Mammary epithelial cell (primary cell): ENCODE measurements at regions of chr12 and their contacts with region 1.

Region 1: GRCh38 chr12:27014085-27014858 is at the start of gene TM7SF3:
- DNase-seq: peak; percentile 92
- H3K4me3 ChIP-seq: peak within 1 kb of the TSS; percentile 73 to 97 (median 96)
- H3K27ac ChIP-seq: peak within 1 kb of the TSS; percentile 98
- H3K4me1 ChIP-seq: peaks cover 38% of the 10 kb centered on the region
- H3K27me3 ChIP-seq: no peaks in the 10 kb centered on the region
- CTCF ChIP-seq: peak; percentile 67 to 86
- total RNA-seq, gene TM7SF3: 182 to 298 TPM

Region 2: GRCh38 chr12:26918309-26919215 is 95.7 kb before region 1 on chr12:
- CTCF ChIA-PET with region 1: interaction called, 10 read pairs
- dilution Hi-C with region 1: no loop called
- in situ Hi-C with region 1: no loop called
- intact Hi-C with region 1: no loop called
- DNase-seq: no peak
- H3K4me3 ChIP-seq: no peak overlapping the region
- H3K27ac ChIP-seq: no peak overlapping the region
- H3K4me1 ChIP-seq: no peaks in the 10 kb centered on the region
- H3K27me3 ChIP-seq: no peaks in the 10 kb centered on the region
- CTCF ChIP-seq: no peak

Region 3: DNA sequence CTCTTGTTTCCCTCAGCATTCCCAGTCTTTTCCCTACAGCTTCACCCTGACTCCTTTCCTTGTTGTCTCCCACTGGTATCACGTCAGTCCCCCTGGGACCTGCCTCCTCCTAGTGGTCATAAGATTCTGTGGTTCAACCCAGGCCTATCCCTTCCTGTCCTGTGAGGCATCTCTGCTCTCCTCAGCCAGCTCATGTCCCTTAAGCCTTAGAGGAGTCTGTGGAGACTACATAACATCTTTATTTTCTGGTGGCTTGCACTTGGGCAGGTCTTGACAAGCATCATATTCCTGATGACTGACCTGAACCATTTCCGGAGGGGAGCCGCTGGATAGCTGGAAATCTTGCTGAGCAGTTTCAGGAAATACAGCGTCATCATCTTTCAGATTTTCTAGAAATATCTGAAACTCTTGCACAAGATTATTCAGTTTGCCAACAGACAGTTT is 67.4 kb after region 1 on chr12:
- CTCF ChIA-PET with region 1: no interaction called
- dilution Hi-C with region 1: no loop called
- in situ Hi-C with region 1: no loop called
- intact Hi-C with region 1: loop called (anchors 1 kb)
- DNase-seq: peak; percentile 96
- H3K4me3 ChIP-seq: no peak overlapping the region
- H3K27ac ChIP-seq: peak overlapping the region; percentile 100
- H3K4me1 ChIP-seq: peaks cover 56% of the 10 kb centered on the region
- H3K27me3 ChIP-seq: no peaks in the 10 kb centered on the region
- CTCF ChIP-seq: peak; percentile 26 to 55

Region 4: DNA sequence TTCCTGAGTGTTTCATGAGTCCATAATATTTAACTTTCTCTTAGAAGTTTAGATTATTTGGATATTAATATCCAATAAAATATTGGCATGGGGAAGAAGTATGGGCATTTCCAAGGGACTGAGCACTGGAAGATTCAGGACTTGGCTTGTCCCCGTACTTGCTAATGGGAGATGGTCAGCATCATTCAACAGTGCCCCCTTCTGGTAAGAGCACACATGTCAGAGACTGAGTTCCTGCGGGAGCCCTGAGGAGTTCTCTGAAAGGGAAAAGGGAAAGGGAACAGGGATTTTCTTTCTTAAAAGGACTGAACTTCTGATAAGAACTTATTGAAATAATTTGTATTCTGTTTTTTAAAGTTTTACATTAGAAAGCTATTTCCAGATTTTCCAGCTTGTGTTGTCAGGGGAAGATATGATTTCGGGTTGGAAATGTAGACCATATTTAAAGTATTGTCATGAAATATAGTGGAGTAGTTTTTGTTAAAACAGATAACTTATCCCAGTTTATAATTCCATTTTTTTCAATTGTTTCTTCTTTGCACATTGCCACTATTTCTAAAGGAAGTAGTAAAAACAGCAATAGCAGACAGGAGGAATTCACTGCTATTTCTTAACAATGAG is 127.9 kb after region 1 on chr12:
- CTCF ChIA-PET with region 1: no interaction called
- dilution Hi-C with region 1: no loop called
- in situ Hi-C with region 1: no loop called
- intact Hi-C with region 1: loop called (anchors 1 kb)
- DNase-seq: peak; percentile 64
- H3K4me3 ChIP-seq: no peak overlapping the region
- H3K27ac ChIP-seq: no peak overlapping the region
- H3K4me1 ChIP-seq: no peaks in the 10 kb centered on the region
- H3K27me3 ChIP-seq: no peaks in the 10 kb centered on the region
- CTCF ChIP-seq: peak; percentile 85 to 87

Region 5: DNA sequence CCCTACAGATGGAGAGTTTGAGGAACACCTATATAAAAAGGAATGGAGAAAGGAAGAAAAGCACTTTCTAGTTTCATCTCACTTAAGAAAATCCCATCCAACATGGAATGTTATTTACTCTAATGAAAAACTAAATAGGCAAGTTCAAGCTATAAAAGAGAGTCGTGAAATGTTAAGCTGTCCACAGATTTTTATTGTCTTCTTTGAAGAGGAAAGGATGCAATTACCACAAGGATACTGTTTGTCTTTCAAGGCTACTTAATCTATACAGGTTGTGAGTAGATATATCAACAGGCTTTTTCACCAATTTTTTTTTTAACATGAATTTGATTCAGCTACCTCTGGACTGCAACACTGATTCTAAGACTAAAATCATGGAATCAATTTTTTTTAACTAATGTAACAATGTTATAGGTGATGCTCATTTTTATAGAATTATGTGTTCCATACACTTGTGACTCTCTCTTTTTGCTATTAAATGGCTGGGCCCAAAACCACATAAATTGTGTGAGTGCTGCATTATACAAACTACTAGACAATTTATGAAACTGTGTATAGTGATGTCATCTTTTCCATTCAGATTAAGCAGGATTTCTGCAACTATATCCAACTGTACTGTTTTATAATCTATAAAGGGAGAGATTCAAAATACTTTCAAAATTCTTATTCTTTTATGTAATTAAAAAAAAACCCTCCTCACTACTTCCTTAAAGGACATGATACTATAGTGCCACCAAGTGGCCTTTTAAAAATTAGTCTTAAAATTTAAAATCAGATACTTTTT is 291.6 kb after region 1 on chr12:
- CTCF ChIA-PET with region 1: interaction called, 9 read pairs
- dilution Hi-C with region 1: no loop called
- in situ Hi-C with region 1: no loop called
- intact Hi-C with region 1: loop called (anchors 1 kb)
- DNase-seq: no peak
- H3K4me3 ChIP-seq: no peak overlapping the region
- H3K27ac ChIP-seq: no peak overlapping the region
- H3K4me1 ChIP-seq: no peaks in the 10 kb centered on the region
- H3K27me3 ChIP-seq: no peaks in the 10 kb centered on the region
- CTCF ChIP-seq: peak; percentile 37 to 45

Region 6: GRCh38 chr12:27703710-27704452 is 689.6 kb after region 1 on chr12:
- CTCF ChIA-PET with region 1: no interaction called
- dilution Hi-C with region 1: no loop called
- in situ Hi-C with region 1: no loop called
- intact Hi-C with region 1: loop called (anchors 5 kb)
- DNase-seq: peak; percentile 66
- H3K4me3 ChIP-seq: no peak overlapping the region
- H3K27ac ChIP-seq: no peak overlapping the region
- H3K4me1 ChIP-seq: no peaks in the 10 kb centered on the region
- H3K27me3 ChIP-seq: no peaks in the 10 kb centered on the region
- CTCF ChIP-seq: peak; percentile 90 to 93